ENCODE measurements at regions of chr2 and their contacts with region 1.

Region 1: DNA sequence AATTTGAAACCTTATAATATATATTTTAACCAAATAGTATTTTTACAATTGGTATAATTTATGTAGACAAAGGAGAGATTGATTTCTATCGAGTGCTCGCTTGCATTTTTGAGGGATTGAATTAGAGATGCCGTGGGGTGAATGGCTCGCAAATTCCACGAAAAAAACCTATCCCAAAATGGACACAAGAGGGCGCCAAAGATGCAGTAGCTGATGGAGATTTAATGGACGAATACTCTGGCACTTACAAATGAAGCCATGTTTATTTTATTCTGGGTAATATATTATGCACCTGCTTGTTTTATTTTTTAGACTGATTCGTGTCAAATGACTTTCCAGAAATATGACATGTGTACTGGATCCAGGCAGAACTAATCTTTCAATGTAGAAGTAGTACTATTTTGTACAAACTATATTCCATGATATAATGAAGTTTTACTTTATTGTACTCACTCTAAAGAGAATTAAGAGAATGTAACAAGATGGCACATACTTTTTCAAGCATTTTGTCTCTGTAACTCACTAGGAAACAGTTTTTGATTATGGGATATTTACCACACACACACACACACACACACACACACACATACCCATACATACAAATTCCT is 505.4 kb downstream of the PLCL1 start:
- DNase-seq: peak; percentile 78
- H3K4me3 Mint-ChIP-seq: no peak overlapping the region
- H3K27ac Mint-ChIP-seq: no peak overlapping the region
- H3K4me1 Mint-ChIP-seq: no peaks in the 10 kb centered on the region
- H3K27me3 Mint-ChIP-seq: peaks cover 23% of the 10 kb centered on the region

Region 2: GRCh38 chr2:197969391-197969893 is 340.3 kb before region 1 on chr2:
- CTCF ChIA-PET with region 1: no interaction called
- intact Hi-C with region 1: no loop called
- DNase-seq: no peak
- H3K4me3 Mint-ChIP-seq: no peak overlapping the region
- H3K27ac Mint-ChIP-seq: peak overlapping the region; percentile 85
- H3K4me1 Mint-ChIP-seq: peaks cover 52% of the 10 kb centered on the region
- H3K27me3 Mint-ChIP-seq: no peaks in the 10 kb centered on the region

Region 3: DNA sequence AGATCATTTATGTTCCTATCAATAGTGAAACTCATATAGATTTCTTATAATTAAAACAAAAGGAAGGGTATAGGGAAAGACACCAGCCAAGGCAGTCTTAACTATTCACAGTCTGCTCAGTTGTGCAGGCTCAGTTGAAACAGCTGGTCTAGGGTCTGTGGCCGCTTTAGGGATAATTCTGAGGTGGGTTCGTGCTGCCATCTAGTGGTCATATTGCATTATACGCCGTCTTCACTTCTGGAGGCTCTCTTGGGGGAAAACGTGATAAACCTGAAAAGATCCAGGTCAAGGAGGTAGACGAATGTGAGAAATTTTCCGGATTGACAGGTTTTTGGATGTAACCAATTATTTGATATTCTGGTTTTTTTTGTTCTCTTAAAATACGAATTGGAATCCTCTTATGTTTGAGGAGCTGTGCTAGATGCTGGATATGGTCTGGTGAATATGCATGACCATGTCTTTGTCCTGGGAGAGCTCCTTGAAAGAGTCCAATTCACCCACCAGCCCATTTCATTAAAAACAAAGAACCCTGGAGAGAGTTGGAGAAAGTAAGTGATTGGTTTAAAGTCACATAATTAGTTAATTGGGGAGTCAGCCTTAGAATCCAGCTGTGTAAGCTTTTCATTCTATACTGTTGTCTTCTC is 13.0 kb before region 1 on chr2:
- CTCF ChIA-PET with region 1: interaction called, 34 read pairs
- intact Hi-C with region 1: no loop called
- DNase-seq: peak; percentile 73
- H3K4me3 Mint-ChIP-seq: no peak overlapping the region
- H3K27ac Mint-ChIP-seq: no peak overlapping the region
- H3K4me1 Mint-ChIP-seq: no peaks in the 10 kb centered on the region
- H3K27me3 Mint-ChIP-seq: peaks cover 7% of the 10 kb centered on the region

Region 4: DNA sequence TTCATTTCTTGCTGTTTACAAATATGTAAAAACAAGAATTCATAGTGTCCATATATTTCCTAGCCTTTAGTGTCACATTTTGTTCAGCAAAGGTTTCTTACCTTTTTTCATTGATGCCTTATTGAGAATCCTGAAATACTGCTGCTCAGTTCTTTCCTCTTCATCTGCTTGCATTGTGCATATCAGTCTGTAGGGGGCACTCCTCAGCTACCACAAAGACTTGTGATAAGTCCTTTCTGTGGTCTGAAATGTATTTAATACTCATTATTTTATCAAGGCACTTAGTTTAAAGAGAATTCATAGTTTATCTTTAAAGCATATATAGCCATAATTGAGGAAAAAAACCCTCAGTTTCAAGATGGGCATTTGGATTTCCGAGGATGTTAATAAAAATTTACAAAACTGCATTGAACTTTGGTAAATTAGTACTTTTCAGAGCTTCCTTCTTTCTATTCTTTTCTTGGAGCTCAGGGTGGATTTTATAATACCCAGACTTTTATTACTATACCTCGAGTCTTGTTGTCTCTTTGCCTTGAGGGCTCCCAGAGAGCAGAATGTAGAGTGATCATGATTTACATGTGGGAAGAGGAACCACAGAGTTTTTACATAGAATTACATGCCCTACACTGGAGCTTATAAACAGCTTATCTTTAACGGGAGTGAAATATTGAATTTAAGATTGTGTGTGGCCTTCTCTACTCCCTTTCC is 64.8 kb after region 1 on chr2:
- CTCF ChIA-PET with region 1: interaction called, 4 read pairs
- intact Hi-C with region 1: loop called (anchors 2 kb)
- DNase-seq: peak; percentile 68
- H3K4me3 Mint-ChIP-seq: no peak overlapping the region
- H3K27ac Mint-ChIP-seq: no peak overlapping the region
- H3K4me1 Mint-ChIP-seq: peaks cover 6% of the 10 kb centered on the region
- H3K27me3 Mint-ChIP-seq: peaks cover 9% of the 10 kb centered on the region

Region 5: GRCh38 chr2:199488772-199489400 is 1179.1 kb after region 1 on chr2:
- CTCF ChIA-PET with region 1: interaction called, 11 read pairs
- intact Hi-C with region 1: loop called (anchors 1 kb)
- DNase-seq: peak; percentile 68
- H3K4me3 Mint-ChIP-seq: no peak overlapping the region
- H3K27ac Mint-ChIP-seq: no peak overlapping the region
- H3K4me1 Mint-ChIP-seq: no peaks in the 10 kb centered on the region
- H3K27me3 Mint-ChIP-seq: peaks cover 18% of the 10 kb centered on the region

Region 6: GRCh38 chr2:199596549-199596948 is 1286.8 kb after region 1 on chr2:
- CTCF ChIA-PET with region 1: no interaction called
- intact Hi-C with region 1: loop called (anchors 10 kb)
- DNase-seq: peak; percentile 8
- H3K4me3 Mint-ChIP-seq: no peak overlapping the region
- H3K27ac Mint-ChIP-seq: no peak overlapping the region
- H3K4me1 Mint-ChIP-seq: no peaks in the 10 kb centered on the region
- H3K27me3 Mint-ChIP-seq: peaks cover 8% of the 10 kb centered on the region

Region 7: DNA sequence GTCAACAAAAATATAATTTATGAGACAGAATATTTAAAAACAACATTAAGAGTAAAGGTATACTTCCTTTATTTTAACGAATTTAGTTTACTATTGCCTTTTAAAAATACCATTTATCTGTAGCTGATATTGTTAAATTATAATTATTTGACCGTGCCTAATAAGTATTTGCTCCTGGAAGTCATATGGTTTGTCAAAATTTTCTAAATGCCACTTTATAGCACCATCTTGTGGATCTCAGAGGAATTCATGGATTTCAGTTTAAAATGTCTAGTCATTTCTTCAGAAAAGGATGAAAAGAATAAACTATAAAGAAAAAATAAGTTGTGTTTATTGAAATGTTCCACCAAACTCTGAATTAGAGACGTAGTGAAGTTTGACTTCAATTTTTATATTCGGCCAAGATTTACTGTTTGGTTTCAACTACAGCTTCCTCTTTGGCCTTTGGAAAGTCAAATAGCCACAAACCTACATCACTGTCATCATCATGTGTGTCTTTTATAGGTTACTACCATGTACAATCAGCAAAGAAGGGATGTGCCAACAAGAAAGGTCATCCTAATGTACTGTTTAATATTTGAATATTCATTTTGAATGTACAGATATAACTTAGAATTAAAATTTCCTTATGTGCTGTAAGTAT is 1551.5 kb after region 1 on chr2:
- CTCF ChIA-PET with region 1: no interaction called
- intact Hi-C with region 1: loop called (anchors 2 kb)
- DNase-seq: no peak
- H3K4me3 Mint-ChIP-seq: no peak overlapping the region
- H3K27ac Mint-ChIP-seq: no peak overlapping the region
- H3K4me1 Mint-ChIP-seq: no peaks in the 10 kb centered on the region
- H3K27me3 Mint-ChIP-seq: peaks cover 8% of the 10 kb centered on the region

Measured in activated naive CD4-positive, alpha-beta T cell treated with anti-CD3 and anti-CD28 coated beads for 36 hours (primary cell).